ENCODE measurements at regions of chr12 and their contacts with region 1.

Region 1: DNA sequence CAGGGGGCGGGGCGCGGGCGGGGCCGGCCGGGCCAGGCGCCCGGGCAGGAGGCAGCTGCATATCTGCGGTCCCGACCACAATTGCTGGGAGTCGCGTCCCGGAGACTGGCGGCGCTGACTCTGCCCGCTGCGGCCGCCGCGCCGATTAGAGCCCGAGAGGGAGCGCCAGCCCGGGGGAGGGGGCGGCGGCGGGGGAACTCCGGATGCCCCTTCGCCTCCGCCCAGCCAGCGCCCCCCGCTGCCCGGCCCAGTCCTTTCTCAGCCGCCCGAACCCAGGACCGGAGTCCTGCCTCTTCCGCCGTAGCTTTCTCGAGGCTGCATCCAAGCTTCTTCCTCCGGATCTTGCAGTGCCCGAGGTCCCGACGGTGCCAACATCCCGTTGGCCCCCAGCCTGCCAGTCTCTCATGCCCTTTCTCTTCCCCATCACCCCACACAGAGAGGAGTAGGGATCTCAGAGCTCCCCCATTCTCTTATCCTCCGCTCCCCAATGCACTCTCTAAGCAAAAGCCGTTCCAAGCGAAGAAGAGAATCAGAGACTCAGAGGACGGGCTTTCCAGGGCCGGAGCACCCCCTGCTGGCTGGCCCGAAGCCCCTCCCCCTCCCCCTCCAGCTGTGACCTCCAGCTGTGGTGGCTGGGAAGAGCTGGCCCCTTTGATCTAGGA is 8.8 kb upstream of the SP7 start:
- DNase-seq: no peak
- H3K4me3 ChIP-seq: peak overlapping the region; percentile 70
- CTCF ChIP-seq: peak; percentile 89

Region 2: GRCh38 chr12:53295070-53295890 is 49.7 kb before region 1 on chr12 and contains the start of gene PFDN5:
- CTCF ChIA-PET with region 1: interaction called, 12 read pairs
- POLR2A ChIA-PET with region 1: interaction called, 5 read pairs
- DNase-seq: peak; percentile 51
- H3K4me3 ChIP-seq: peak within 1 kb of the TSS; percentile 93
- CTCF ChIP-seq: peak; percentile 1

Region 3: GRCh38 chr12:53379389-53380103 is 34.6 kb after region 1 on chr12:
- CTCF ChIA-PET with region 1: interaction called, 15 read pairs
- POLR2A ChIA-PET with region 1: no interaction called
- DNase-seq: peak; percentile 100
- H3K4me3 ChIP-seq: peak overlapping the region; percentile 63
- CTCF ChIP-seq: no peak